PC-9 (cell line): ENCODE measurements at regions of chr2 and their contacts with region 1.

Region 1: GRCh38 chr2:183292028-183292427 is 167.8 kb downstream of the NUP35 start:
- DNase-seq: no peak
- H3K4me3 ChIP-seq: no peak overlapping the region
- H3K27ac ChIP-seq: no peak overlapping the region
- H3K4me1 ChIP-seq: no peaks in the 10 kb centered on the region
- H3K27me3 ChIP-seq: no peaks in the 10 kb centered on the region
- CTCF ChIP-seq: no peak

Region 2: GRCh38 chr2:183359867-183360266 is 67.8 kb after region 1 on chr2:
- CTCF ChIA-PET with region 1: no interaction called
- POLR2A ChIA-PET with region 1: no interaction called
- intact Hi-C with region 1: loop called (anchors 5 kb)
- DNase-seq: no peak
- H3K4me3 ChIP-seq: no peak overlapping the region
- H3K27ac ChIP-seq: no peak overlapping the region
- H3K4me1 ChIP-seq: no peaks in the 10 kb centered on the region
- H3K27me3 ChIP-seq: no peaks in the 10 kb centered on the region
- CTCF ChIP-seq: peak; percentile 39

Region 3: GRCh38 chr2:183696028-183696427 is 404.0 kb after region 1 on chr2:
- CTCF ChIA-PET with region 1: no interaction called
- POLR2A ChIA-PET with region 1: no interaction called
- intact Hi-C with region 1: no loop called
- DNase-seq: no peak
- H3K4me3 ChIP-seq: no peak overlapping the region
- H3K27ac ChIP-seq: no peak overlapping the region
- H3K4me1 ChIP-seq: no peaks in the 10 kb centered on the region
- H3K27me3 ChIP-seq: no peaks in the 10 kb centered on the region
- CTCF ChIP-seq: no peak